ENCODE measurements at regions of chr10 and their contacts with region 1.

Region 1: GRCh38 chr10:16787361-16787791 is 29.8 kb downstream of the RSU1 start:
- DNase-seq: peak; percentile 13 to 75 (median 52)
- ATAC-seq: peak; percentile 97
- H3K4me3 ChIP-seq: no peak overlapping the region
- H3K4me3 Mint-ChIP-seq: peak overlapping the region in 8 of 10 donors; percentile 4 to 56 (median 34)
- H3K27ac ChIP-seq: peak overlapping the region; percentile 65
- H3K27ac Mint-ChIP-seq: peak overlapping the region; percentile 90 to 98 (median 93)
- H3K4me1 ChIP-seq: peaks cover 23 to 24% of the 10 kb centered on the region in 2 donors
- H3K4me1 Mint-ChIP-seq: peaks cover 26 to 42% (median 38%) of the 10 kb centered on the region in 7 donors
- H3K27me3 ChIP-seq: no peaks in the 10 kb centered on the region
- H3K27me3 Mint-ChIP-seq: no peaks in the 10 kb centered on the region

Region 2: GRCh38 chr10:16436758-16437539 is 350.4 kb before region 1 on chr10 and contains the start of gene PTER:
- CTCF ChIA-PET with region 1: no interaction called
- POLR2A ChIA-PET with region 1: no interaction called
- intact Hi-C with region 1: loop called (anchors 2 kb)
- DNase-seq: peak; percentile 92 to 99 (median 94)
- ATAC-seq: peak; percentile 100
- H3K4me3 ChIP-seq: peak within 1 kb of the TSS; percentile 93
- H3K4me3 Mint-ChIP-seq: peak within 1 kb of the TSS; percentile 91 to 99 (median 96)
- H3K27ac ChIP-seq: peak within 1 kb of the TSS; percentile 77
- H3K27ac Mint-ChIP-seq: peak within 1 kb of the TSS; percentile 87 to 97 (median 94)
- H3K4me1 ChIP-seq: peaks cover 13 to 28% of the 10 kb centered on the region in 2 donors
- H3K4me1 Mint-ChIP-seq: peaks cover 36 to 57% (median 48%) of the 10 kb centered on the region in 7 donors
- H3K27me3 ChIP-seq: no peaks in the 10 kb centered on the region
- H3K27me3 Mint-ChIP-seq: peaks cover 0 to 19% (median 0%) of the 10 kb centered on the region in 5 donors
- total RNA-seq, gene PTER: 12.9 to 23.7 (median 15.3) TPM

Region 3: DNA sequence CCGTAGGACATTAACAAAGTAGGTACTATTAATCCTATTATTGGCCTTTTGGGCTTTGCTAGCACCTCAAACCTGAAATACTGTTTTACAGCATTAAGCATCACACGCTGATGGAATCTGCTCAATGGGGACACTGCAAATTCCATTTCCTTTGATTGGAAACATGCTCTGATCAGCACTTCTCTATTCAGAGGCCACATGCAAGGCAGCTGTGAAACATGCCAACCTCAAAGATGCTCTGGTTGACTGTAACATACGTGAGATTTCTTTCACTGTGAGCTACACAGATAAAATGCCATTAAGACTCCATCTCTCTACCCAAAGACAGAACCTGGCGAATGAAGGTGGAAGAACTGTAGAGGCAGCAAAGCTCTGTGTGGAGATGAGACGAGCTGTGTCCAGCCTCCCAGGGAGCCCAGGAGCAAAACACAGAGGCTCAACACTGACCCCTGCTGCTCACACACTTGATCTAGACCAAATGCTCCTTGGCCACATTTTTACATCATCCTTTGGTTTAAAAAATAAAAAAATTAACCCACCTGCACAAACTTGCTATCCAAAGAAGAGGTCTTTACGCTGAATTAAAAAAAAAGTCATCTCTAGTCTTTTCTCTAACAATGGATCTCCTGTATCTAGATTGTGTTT is 21.8 kb after region 1 on chr10:
- CTCF ChIA-PET with region 1: no interaction called
- POLR2A ChIA-PET with region 1: interaction called, 4 read pairs
- intact Hi-C with region 1: loop called in 1 of 2 experiments (anchors 2 kb)
- DNase-seq: peak in 3 of 9 donors; percentile 19 to 31 (median 23)
- ATAC-seq: peak; percentile 80
- H3K4me3 ChIP-seq: no peak overlapping the region
- H3K4me3 Mint-ChIP-seq: no peak overlapping the region
- H3K27ac ChIP-seq: no peak overlapping the region
- H3K27ac Mint-ChIP-seq: no peak overlapping the region
- H3K4me1 ChIP-seq: no peaks in the 10 kb centered on the region
- H3K4me1 Mint-ChIP-seq: peaks cover 11 to 41% (median 26%) of the 10 kb centered on the region in 7 donors
- H3K27me3 ChIP-seq: no peaks in the 10 kb centered on the region
- H3K27me3 Mint-ChIP-seq: no peaks in the 10 kb centered on the region

Region 4: DNA sequence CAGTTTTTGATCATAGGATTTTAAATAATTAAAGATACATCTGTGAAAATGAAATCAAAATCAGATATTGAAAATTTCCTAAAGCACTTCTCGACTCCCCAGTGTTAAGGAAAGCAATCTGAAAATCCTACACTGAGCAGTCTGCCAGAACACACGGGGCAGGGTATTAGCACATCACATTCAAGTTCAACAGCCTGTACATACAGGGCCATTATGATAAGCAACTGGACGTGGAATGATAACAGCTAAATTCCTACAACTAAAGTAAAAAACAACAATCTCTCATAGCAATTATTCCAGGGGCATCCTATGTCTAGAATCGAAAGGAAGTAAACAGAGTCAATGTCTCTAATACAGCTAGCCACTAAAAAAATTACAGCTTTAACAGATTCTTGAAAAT is 382.4 kb after region 1 on chr10:
- CTCF ChIA-PET with region 1: no interaction called
- POLR2A ChIA-PET with region 1: no interaction called
- intact Hi-C with region 1: no loop called
- DNase-seq: no peak
- ATAC-seq: no peak
- H3K4me3 ChIP-seq: no peak overlapping the region
- H3K4me3 Mint-ChIP-seq: no peak overlapping the region
- H3K27ac ChIP-seq: no peak overlapping the region
- H3K27ac Mint-ChIP-seq: no peak overlapping the region
- H3K4me1 ChIP-seq: no peaks in the 10 kb centered on the region
- H3K4me1 Mint-ChIP-seq: peaks cover 0 to 2% (median 0%) of the 10 kb centered on the region in 7 donors
- H3K27me3 ChIP-seq: no peaks in the 10 kb centered on the region
- H3K27me3 Mint-ChIP-seq: no peaks in the 10 kb centered on the region

Region 5: GRCh38 chr10:17200912-17201793 is 413.8 kb after region 1 on chr10 and contains the start of gene TRDMT1:
- CTCF ChIA-PET with region 1: no interaction called
- POLR2A ChIA-PET with region 1: no interaction called
- intact Hi-C with region 1: no loop called
- DNase-seq: peak; percentile 60 to 82 (median 74)
- ATAC-seq: peak; percentile 89
- H3K4me3 ChIP-seq: peak within 1 kb of the TSS; percentile 94
- H3K4me3 Mint-ChIP-seq: peak within 1 kb of the TSS; percentile 86 to 99 (median 94)
- H3K27ac ChIP-seq: peak within 1 kb of the TSS; percentile 90
- H3K27ac Mint-ChIP-seq: peak within 1 kb of the TSS; percentile 90 to 99 (median 96)
- H3K4me1 ChIP-seq: peaks cover 9 to 15% of the 10 kb centered on the region in 2 donors
- H3K4me1 Mint-ChIP-seq: peaks cover 25 to 67% (median 51%) of the 10 kb centered on the region in 7 donors
- H3K27me3 ChIP-seq: no peaks in the 10 kb centered on the region
- H3K27me3 Mint-ChIP-seq: peaks cover 0 to 4% (median 0%) of the 10 kb centered on the region in 5 donors
- total RNA-seq, gene TRDMT1: 10.2 to 30.6 (median 15.9) TPM